ENCODE measurements at regions of chr1 and their contacts with region 1.

Region 1: DNA sequence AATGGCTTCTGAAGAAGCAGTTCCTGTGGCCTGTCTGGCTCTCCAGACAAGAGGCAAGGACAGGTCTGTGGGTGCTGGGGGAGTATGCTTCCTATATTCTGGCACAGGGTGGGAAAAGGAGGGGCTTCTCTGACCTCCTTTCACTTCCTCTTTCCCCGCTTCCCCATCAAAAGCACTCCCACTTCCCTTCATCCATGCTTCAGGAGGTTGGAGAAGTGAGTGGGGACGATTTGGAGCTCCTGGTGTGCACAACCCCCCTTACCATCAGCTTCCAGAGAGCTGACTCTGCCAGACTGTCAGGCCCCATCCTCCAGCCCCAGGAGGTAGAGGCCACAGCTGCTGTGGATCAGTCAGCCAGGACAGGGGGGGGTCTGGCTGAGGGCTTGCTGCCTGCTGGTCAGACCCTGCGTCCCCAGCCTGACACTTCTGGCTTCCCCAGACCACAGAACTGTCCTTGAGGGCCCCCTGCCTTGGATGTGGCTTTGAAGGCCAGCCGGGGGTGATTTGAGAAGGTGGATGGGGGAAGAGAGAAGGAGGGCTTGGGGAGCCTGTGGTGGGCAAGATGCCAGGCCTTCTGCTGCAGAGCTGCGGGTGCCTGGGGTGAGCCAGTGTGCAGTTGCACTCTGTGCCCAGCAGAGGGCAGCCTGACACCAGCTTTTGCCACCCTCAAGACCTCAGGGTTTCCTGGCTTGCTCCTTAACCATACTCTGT is 21.5 kb upstream of the TMEM222 start:
- DNase-seq: peak; percentile 76 to 80
- ATAC-seq: peak; percentile 81 to 93
- H3K4me3 ChIP-seq: no peak overlapping the region
- H3K27ac ChIP-seq: peak overlapping the region; percentile 55 to 71; a peak in 5 of 6 replicates
- H3K4me1 ChIP-seq: peaks cover 23% of the 10 kb centered on the region
- CTCF ChIP-seq: peak; percentile 79
- EP300 ChIP-seq: no peak
- POLR2A ChIP-seq: no peak
- RAD21 ChIP-seq: peak; percentile 82 to 92

Region 2: DNA sequence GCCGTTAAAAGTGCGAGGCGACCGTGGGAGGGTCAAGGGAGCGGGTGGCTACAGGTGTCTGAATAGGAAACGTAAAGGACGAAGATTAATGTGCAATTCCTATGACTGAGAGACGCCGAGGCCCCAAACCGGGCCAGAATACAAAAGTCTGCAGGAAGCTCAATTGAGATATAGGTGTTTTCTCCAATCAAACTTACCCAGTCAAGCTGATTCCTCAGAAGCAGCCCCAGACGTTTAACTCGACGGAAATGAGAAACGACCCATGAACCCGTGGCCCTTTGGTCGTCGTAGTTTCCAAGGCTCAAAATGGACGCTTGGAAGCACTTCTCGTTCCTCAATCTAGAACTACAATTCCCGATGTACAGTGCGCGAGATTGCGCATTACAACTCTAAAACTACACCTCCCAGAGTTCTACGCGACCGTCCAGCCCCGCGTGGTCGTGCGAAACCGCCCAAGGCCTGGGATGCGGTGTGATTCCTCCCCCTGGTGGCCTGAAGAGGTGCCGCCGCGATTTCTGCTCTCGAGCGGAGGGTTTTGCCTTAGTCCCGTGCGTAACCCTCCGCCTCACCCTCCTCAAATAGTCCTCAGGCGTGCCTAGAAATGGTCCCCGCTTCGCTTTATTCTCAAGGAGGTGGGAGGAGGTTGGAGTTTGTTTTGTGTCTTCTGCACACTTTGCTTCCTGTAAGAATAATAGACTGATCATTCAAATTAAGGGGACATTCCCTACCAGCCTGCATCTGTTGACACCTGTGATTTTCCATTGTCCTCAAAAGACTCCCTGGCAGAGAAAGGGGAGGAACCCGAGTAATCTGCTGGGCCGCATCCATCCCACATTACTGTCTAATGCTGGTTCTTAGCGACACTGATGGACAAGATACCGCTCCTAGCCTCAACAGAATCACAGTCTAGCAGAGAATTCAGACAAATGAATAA is 1302.4 kb before region 1 on chr1 and contains the start of gene PAFAH2:
- CTCF ChIA-PET with region 1: no interaction called
- POLR2A ChIA-PET with region 1: no interaction called
- DNase-seq: peak; percentile 84 to 99
- ATAC-seq: peak; percentile 98 to 99
- H3K4me3 ChIP-seq: peak within 1 kb of the TSS; percentile 74
- H3K27ac ChIP-seq: peak within 1 kb of the TSS; percentile 88 to 94
- H3K4me1 ChIP-seq: peaks cover 11% of the 10 kb centered on the region
- CTCF ChIP-seq: peak; percentile 89
- EP300 ChIP-seq: no peak
- POLR2A ChIP-seq: peak; percentile 11; the same call in 1 of the 2 replicates
- RAD21 ChIP-seq: peak; percentile 92 to 94
- polyA plus RNA-seq, gene PAFAH2: 13.7 and 13.8 TPM in 2 replicates

Region 3: DNA sequence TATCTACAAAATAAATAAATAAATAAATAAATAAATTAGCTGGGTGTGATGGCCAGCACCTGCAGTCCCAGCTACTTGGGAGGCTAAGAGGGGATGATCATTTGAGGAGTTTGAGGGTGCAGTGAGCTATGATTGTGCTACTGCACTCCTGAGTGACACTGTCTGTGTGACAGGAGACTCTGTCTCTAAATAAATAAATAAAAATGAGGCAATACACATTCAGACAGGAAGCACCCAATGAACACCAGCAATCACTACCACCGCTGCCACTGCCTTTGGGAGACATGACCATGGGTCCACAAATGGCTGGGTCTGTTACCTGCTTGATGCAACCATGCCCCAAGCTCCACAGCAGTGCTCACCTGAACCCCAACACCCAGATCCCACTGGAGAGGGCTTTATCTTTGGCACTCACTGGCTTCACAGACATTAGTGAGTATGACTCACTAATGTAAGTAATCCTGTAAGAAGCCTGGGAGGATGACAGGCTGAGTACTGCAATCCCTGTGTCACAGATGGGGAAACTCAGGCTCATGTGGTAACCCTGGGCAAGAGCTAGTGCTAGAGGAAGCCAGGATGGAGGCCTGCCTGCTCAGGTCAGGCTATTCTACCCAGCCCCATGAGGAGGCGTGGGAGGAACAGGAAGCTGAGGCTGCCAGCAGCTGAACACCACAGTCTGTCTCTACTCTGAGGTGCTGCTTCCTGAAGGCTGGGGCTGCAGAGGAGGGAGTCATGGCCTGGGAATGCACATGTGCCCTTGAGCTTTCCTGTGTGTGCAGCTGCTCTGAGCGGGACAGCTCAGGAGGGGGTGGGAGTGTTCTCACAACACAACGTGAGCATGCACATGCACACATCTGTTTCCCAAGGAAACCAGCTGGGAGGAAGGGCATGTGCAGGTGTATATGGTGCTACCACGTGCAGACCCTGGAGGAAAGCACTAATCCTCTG is 188.6 kb before region 1 on chr1:
- CTCF ChIA-PET with region 1: interaction called, 18 read pairs
- POLR2A ChIA-PET with region 1: no interaction called
- DNase-seq: peak; percentile 65 to 81
- ATAC-seq: peak; percentile 94 to 96
- H3K4me3 ChIP-seq: no peak overlapping the region
- H3K27ac ChIP-seq: peak overlapping the region; percentile 67 to 83
- H3K4me1 ChIP-seq: peaks cover 30% of the 10 kb centered on the region
- CTCF ChIP-seq: no peak
- EP300 ChIP-seq: no peak
- POLR2A ChIP-seq: no peak
- RAD21 ChIP-seq: peak; percentile 46 to 48; a peak in 3 of 5 replicates

Region 4: DNA sequence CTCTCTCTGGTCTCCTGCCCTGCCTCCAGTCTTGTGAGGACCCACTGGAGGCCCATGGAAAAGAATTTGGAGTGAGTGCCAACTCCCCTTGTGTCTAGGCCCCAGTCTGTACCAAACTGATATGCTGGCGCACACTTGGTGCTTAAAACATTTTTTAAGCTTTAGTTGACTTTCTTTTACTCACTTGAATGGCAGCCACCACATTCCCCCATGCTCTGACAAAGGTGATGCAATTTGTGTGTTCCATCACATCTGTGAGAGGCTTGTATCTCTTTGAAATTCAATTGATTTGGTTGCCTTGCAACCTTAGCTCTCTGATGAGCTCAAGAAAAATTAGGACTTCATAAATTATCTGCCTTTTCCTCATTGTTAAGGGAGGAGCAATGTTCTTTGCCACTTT is 96.5 kb before region 1 on chr1:
- CTCF ChIA-PET with region 1: no interaction called
- POLR2A ChIA-PET with region 1: no interaction called
- DNase-seq: no peak
- ATAC-seq: no peak
- H3K4me3 ChIP-seq: no peak overlapping the region
- H3K27ac ChIP-seq: no peak overlapping the region
- H3K4me1 ChIP-seq: no peaks in the 10 kb centered on the region
- CTCF ChIP-seq: no peak
- EP300 ChIP-seq: no peak
- POLR2A ChIP-seq: no peak
- RAD21 ChIP-seq: no peak

Region 5: DNA sequence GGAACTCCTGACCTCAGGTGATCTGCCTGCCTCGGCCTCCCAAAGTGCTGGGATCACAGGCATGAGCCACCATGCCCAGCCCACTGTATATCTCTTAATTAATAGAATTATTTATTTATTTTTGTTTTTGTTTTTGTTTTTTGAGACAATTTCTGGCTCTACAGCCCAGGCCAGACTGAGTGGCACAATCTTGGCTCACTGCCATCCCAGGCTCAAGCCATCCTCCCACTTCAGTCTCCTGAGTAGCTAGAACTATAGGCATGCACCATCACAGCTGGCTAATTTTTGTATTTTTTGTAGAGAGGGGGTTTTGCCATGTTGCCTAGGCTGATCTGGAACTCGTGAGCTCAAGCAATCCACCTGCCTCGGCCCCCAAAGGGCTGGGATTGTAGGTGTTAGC is 81.8 kb before region 1 on chr1:
- CTCF ChIA-PET with region 1: no interaction called
- POLR2A ChIA-PET with region 1: no interaction called
- DNase-seq: no peak
- ATAC-seq: no peak
- H3K4me3 ChIP-seq: no peak overlapping the region
- H3K27ac ChIP-seq: no peak overlapping the region
- H3K4me1 ChIP-seq: no peaks in the 10 kb centered on the region
- CTCF ChIP-seq: no peak
- EP300 ChIP-seq: no peak
- POLR2A ChIP-seq: no peak
- RAD21 ChIP-seq: no peak

Region 6: GRCh38 chr1:27321813-27322577 is 21.5 kb after region 1 on chr1 and contains the start of gene TMEM222:
- CTCF ChIA-PET with region 1: interaction called, 89 read pairs
- POLR2A ChIA-PET with region 1: no interaction called
- DNase-seq: peak; percentile 95
- ATAC-seq: peak; percentile 98 to 99
- H3K4me3 ChIP-seq: peak within 1 kb of the TSS; percentile 99
- H3K27ac ChIP-seq: peak within 1 kb of the TSS; percentile 97 to 98
- H3K4me1 ChIP-seq: peaks cover 8% of the 10 kb centered on the region; the same call in 2 of the 3 replicates
- CTCF ChIP-seq: no peak
- EP300 ChIP-seq: no peak
- POLR2A ChIP-seq: peak; percentile 58
- RAD21 ChIP-seq: no peak; a peak in 1 of 5 replicates
- polyA plus RNA-seq, gene TMEM222: 27.1 and 28.4 TPM in 2 replicates

Region 7: GRCh38 chr1:27357281-27358037 is 57.0 kb after region 1 on chr1:
- CTCF ChIA-PET with region 1: interaction called, 36 read pairs
- POLR2A ChIA-PET with region 1: no interaction called
- DNase-seq: peak; percentile 49 to 78
- ATAC-seq: peak; percentile 75 to 88; a peak in 5 of 6 replicates
- H3K4me3 ChIP-seq: no peak overlapping the region
- H3K27ac ChIP-seq: no peak overlapping the region
- H3K4me1 ChIP-seq: no peaks in the 10 kb centered on the region
- CTCF ChIP-seq: peak; percentile 79
- EP300 ChIP-seq: no peak
- POLR2A ChIP-seq: no peak
- RAD21 ChIP-seq: peak; percentile 31 to 46; a peak in 2 of 5 replicates

Region 8: DNA sequence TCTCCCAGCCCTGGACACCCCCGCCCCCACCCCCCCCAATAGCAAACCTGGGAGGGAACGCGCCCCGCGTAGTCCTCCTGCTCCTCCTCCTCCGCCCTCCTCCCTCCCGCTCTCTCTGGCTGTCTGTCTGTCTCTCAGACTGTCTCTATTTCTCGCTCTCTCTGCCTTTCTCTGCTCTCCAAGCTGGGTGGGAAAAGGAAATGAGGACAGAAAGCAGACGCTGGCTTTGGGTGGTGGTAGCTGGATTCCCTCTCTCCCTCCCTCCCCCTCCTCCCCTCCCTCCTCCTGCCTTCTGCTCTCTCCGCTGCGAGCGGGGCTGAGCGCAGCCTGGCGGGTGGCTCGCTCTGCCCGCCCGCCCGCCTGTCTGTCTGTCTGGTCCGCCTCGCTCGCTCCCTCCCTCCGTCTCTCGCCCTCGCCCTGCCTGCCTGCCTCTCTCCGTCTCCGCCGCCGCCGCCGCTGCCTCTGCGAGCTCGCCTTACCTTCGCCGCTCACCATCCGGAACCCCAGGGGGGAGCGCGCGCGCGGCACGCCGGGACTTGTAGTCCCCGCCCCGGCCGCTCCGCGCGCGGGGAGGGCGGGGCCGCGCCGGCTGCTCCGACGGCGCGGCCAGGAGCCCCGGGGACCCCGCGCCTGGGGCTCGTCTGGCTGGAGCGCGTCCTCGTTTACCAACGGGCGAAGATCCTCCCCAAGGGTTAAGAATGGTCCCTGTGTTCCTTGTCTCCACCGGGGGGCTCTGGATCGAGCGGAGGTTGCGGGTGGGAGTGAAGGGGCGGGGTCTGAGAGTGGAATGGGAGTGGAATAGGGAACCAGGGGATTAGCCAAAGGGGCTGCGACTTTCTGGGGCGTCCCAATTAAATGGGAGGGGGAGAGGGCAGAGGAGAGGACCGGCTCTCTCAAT is 303.4 kb after region 1 on chr1 and contains the start of gene AHDC1:
- CTCF ChIA-PET with region 1: interaction called, 78 read pairs
- POLR2A ChIA-PET with region 1: no interaction called
- DNase-seq: peak; percentile 80 to 88
- ATAC-seq: peak; percentile 71 to 76
- H3K4me3 ChIP-seq: peak within 1 kb of the TSS; percentile 90
- H3K27ac ChIP-seq: peak within 1 kb of the TSS; percentile 83 to 89
- H3K4me1 ChIP-seq: peaks cover 47% of the 10 kb centered on the region
- CTCF ChIP-seq: no peak
- EP300 ChIP-seq: no peak
- POLR2A ChIP-seq: peak; percentile 65
- RAD21 ChIP-seq: 0 out of 5 replicates have a peak, but pooled peaks of 1 of the 2 experiments have one; percentile 16
- polyA plus RNA-seq, gene AHDC1: 1.3 and 2.6 TPM in 2 replicates

Measured in A549 (cell line).